GM12878 (cell line): ENCODE measurements at regions of chr7 and their contacts with region 1.

Region 1: GRCh38 chr7:1086588-1087464 is 1.1 kb upstream of the GPER1 start:
- DNase-seq: no peak
- ATAC-seq: peak; percentile 96
- H3K4me3 ChIP-seq: peak overlapping the region; percentile 43; the same call in 1 of the 2 replicates
- H3K27ac ChIP-seq: peak overlapping the region; percentile 76
- H3K4me1 ChIP-seq: peaks cover 12% of the 10 kb centered on the region
- H3K27me3 ChIP-seq: no peaks in the 10 kb centered on the region
- CTCF ChIP-seq: peak; percentile 73 to 81 (median 78)
- EP300 ChIP-seq: peak; percentile 64 to 72
- POLR2A ChIP-seq: peak; percentile 70
- RAD21 ChIP-seq: peak; percentile 57; the same call in 1 of the 2 replicates

Region 2: GRCh38 chr7:1028031-1028770 is 58.6 kb before region 1 on chr7:
- CTCF ChIA-PET with region 1: interaction called, 4 read pairs
- POLR2A ChIA-PET with region 1: interaction called, 5 read pairs
- RAD21 ChIA-PET with region 1: interaction called, 11 read pairs
- SMC1A ChIA-PET with region 1: interaction called, 6 read pairs
- in situ Hi-C with region 1: no loop called
- intact Hi-C with region 1: no loop called
- DNase-seq: no peak
- ATAC-seq: peak; percentile 62
- H3K4me3 ChIP-seq: peak overlapping the region; percentile 99
- H3K27ac ChIP-seq: peak overlapping the region; percentile 95
- H3K4me1 ChIP-seq: peaks cover 36% of the 10 kb centered on the region
- H3K27me3 ChIP-seq: no peaks in the 10 kb centered on the region
- CTCF ChIP-seq: no peak
- EP300 ChIP-seq: no peak; a peak in 1 of 4 replicates
- POLR2A ChIP-seq: peak; percentile 84
- RAD21 ChIP-seq: no peak

Region 3: DNA sequence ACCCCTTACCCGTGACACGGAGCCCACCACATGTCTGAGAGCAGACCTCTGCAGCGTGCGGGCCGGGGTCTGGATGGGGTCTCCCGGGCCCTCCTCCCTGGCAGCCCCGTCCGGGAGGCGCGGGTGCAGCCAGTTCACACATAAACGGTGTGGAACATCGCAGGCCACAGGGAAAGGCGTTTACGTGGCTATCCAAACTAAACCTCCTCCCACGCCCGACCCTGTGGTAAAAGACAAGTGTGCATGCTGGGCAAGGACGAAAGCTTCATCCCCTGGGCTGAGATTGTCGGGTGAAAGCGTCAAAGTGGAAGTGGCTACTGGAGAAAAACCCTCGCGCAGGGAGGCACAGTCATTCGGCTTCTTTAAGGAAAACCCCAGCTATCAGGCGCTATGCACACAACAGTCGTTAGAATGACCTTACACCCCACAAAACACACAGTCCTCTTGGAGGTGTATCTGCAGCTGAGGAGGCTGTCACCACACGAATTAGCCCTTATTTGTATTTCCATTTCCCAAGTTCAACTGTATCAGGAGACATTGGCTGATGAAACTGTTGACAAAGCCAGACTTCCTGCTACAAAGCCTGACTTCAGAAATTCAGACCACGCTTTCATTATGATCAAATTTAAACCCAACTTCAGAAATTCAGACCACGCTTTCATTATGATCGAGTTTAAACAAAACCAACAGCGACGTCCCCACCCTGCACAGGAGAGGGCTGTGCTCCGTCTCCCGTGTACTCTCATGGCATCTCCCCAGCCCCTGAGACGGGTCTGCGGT is 16.4 kb after region 1 on chr7:
- CTCF ChIA-PET with region 1: interaction called, 77 read pairs
- POLR2A ChIA-PET with region 1: interaction called, 12 read pairs
- RAD21 ChIA-PET with region 1: interaction called, 41 read pairs
- SMC1A ChIA-PET with region 1: interaction called, 38 read pairs
- in situ Hi-C with region 1: no loop called
- intact Hi-C with region 1: loop called (anchors 2 kb)
- DNase-seq: peak; percentile 73
- ATAC-seq: peak; percentile 79
- H3K4me3 ChIP-seq: peak overlapping the region; percentile 64
- H3K27ac ChIP-seq: peak overlapping the region; percentile 70
- H3K4me1 ChIP-seq: peaks cover 33% of the 10 kb centered on the region
- H3K27me3 ChIP-seq: no peaks in the 10 kb centered on the region
- CTCF ChIP-seq: no peak
- EP300 ChIP-seq: peak; percentile 38 to 78; a peak in 3 of 4 replicates
- POLR2A ChIP-seq: peak; percentile 62; the same call in 1 of the 2 replicates
- RAD21 ChIP-seq: no peak

Region 4: GRCh38 chr7:1144269-1144771 is 57.5 kb after region 1 on chr7:
- CTCF ChIA-PET with region 1: interaction called, 31 read pairs
- POLR2A ChIA-PET with region 1: interaction called, 16 read pairs
- RAD21 ChIA-PET with region 1: interaction called, 22 read pairs
- SMC1A ChIA-PET with region 1: interaction called, 9 read pairs
- in situ Hi-C with region 1: no loop called
- intact Hi-C with region 1: loop called (anchors 5 kb)
- DNase-seq: no peak
- ATAC-seq: peak; percentile 62
- H3K4me3 ChIP-seq: no peak overlapping the region
- H3K27ac ChIP-seq: no peak overlapping the region
- H3K4me1 ChIP-seq: no peaks in the 10 kb centered on the region; the same call in 1 of the 2 replicates
- H3K27me3 ChIP-seq: no peaks in the 10 kb centered on the region
- CTCF ChIP-seq: peak; percentile 15 to 53 (median 49); a peak in 5 of 6 replicates
- EP300 ChIP-seq: no peak
- POLR2A ChIP-seq: no peak
- RAD21 ChIP-seq: peak; percentile 73

Region 5: GRCh38 chr7:1175967-1176851 is 89.4 kb after region 1 on chr7:
- CTCF ChIA-PET with region 1: interaction called, 60 read pairs
- POLR2A ChIA-PET with region 1: interaction called, 8 read pairs
- RAD21 ChIA-PET with region 1: interaction called, 20 read pairs
- SMC1A ChIA-PET with region 1: interaction called, 11 read pairs
- in situ Hi-C with region 1: no loop called
- intact Hi-C with region 1: loop called (anchors 1 kb)
- DNase-seq: peak; percentile 26
- ATAC-seq: peak; percentile 95
- H3K4me3 ChIP-seq: peak overlapping the region; percentile 19; the same call in 1 of the 2 replicates
- H3K27ac ChIP-seq: no peak overlapping the region
- H3K4me1 ChIP-seq: no peaks in the 10 kb centered on the region
- H3K27me3 ChIP-seq: no peaks in the 10 kb centered on the region
- CTCF ChIP-seq: peak; percentile 85 to 96 (median 95)
- EP300 ChIP-seq: no peak
- POLR2A ChIP-seq: 0 out of 2 replicates have a peak, but pooled peaks have one; percentile 37
- RAD21 ChIP-seq: peak; percentile 64